H1 (cell line): ENCODE measurements at regions of chr2 and their contacts with region 1.

Region 1: DNA sequence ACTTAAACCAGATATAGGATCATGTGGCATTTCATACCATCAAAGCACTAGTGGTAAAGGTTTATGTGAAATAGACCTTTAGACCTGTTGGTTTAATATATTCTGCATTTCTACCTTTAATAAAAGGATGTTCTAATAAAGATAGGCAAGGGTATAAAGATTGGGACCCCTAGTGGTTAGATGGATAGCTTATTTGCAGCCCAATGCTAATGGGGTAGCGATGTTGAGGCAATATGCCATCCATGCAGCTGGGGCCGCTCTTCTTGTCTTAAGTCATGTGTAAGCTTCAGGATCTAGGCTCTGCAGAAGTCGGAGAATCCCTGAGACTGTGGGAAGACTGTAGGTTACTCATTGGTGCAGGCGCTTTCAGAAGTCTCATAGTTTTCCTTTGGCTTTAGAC is 114.9 kb downstream of the ICOS start:
- DNase-seq: no peak
- H3K4me3 ChIP-seq: no peak overlapping the region
- H3K27ac ChIP-seq: no peak overlapping the region
- H3K4me1 ChIP-seq: no peaks in the 10 kb centered on the region
- H3K27me3 ChIP-seq: no peaks in the 10 kb centered on the region
- CTCF ChIP-seq: peak; percentile 22 to 63 (median 61)
- EP300 ChIP-seq: no peak
- POLR2A ChIP-seq: no peak
- RAD21 ChIP-seq: peak; percentile 17 to 21; a peak in 2 of 4 replicates

Region 2: DNA sequence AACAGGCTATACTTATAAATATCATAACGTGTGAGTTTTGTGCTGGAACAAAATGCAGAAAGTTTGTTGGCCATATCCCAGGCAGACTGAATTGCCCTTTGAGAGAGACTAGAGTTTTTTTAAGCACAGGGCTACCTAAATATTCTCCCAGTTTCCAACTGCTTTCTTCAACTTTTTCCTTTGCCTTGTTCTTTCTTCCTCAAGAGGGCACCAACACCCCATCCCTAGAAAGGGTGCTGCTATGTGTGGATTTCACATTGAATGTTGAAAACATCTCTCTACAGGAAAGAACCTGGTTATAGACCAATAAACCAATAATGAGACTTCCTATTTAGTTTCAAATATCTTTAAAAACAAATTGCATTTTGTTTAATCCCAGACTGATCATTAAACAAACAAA is 27.0 kb before region 1 on chr2:
- CTCF ChIA-PET with region 1: interaction called, 25 read pairs
- POLR2A ChIA-PET with region 1: no interaction called
- DNase-seq: no peak
- H3K4me3 ChIP-seq: no peak overlapping the region
- H3K27ac ChIP-seq: no peak overlapping the region
- H3K4me1 ChIP-seq: no peaks in the 10 kb centered on the region
- H3K27me3 ChIP-seq: no peaks in the 10 kb centered on the region; a peak in 1 of 7 replicates
- CTCF ChIP-seq: peak in 2 of 3 experiments; percentile 61 to 66; a peak in 3 of 4 replicates
- EP300 ChIP-seq: no peak
- POLR2A ChIP-seq: no peak
- RAD21 ChIP-seq: peak; percentile 82 to 84

Region 3: DNA sequence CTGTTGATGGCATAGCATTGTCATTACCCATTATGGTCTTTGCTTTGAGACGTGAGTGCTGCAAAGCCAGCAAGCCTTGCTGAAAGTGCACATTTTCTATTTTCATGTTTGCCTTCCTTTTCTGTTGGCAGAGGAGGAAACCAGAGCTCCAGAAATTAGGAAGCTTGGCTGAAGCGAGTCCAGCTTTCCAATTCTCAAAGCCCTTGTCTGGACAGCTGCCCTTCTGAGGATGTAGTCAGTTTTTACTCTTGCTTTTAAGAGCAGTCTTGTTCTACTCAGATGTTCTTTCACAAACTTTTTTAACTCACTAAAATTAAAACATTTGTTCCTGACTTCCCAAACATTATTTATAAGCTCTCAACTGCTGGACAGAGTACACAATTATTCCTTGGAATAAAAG is 21.2 kb before region 1 on chr2:
- CTCF ChIA-PET with region 1: interaction called, 25 read pairs
- POLR2A ChIA-PET with region 1: no interaction called
- DNase-seq: no peak
- H3K4me3 ChIP-seq: no peak overlapping the region
- H3K27ac ChIP-seq: no peak overlapping the region
- H3K4me1 ChIP-seq: no peaks in the 10 kb centered on the region
- H3K27me3 ChIP-seq: no peaks in the 10 kb centered on the region; a peak in 1 of 7 replicates
- CTCF ChIP-seq: no peak
- EP300 ChIP-seq: no peak
- POLR2A ChIP-seq: no peak
- RAD21 ChIP-seq: no peak

Region 4: GRCh38 chr2:204039298-204039838 is 12.1 kb before region 1 on chr2:
- CTCF ChIA-PET with region 1: interaction called, 23 read pairs
- POLR2A ChIA-PET with region 1: no interaction called
- DNase-seq: no peak
- H3K4me3 ChIP-seq: no peak overlapping the region
- H3K27ac ChIP-seq: no peak overlapping the region
- H3K4me1 ChIP-seq: no peaks in the 10 kb centered on the region
- H3K27me3 ChIP-seq: no peaks in the 10 kb centered on the region
- CTCF ChIP-seq: no peak
- EP300 ChIP-seq: no peak
- POLR2A ChIP-seq: no peak
- RAD21 ChIP-seq: no peak

Region 5: GRCh38 chr2:204072443-204073324 is 21.2 kb after region 1 on chr2:
- CTCF ChIA-PET with region 1: interaction called, 23 read pairs
- POLR2A ChIA-PET with region 1: no interaction called
- DNase-seq: peak; percentile 38 to 90
- H3K4me3 ChIP-seq: no peak overlapping the region
- H3K27ac ChIP-seq: no peak overlapping the region
- H3K4me1 ChIP-seq: no peaks in the 10 kb centered on the region
- H3K27me3 ChIP-seq: no peaks in the 10 kb centered on the region
- CTCF ChIP-seq: peak; percentile 71 to 75 (median 74)
- EP300 ChIP-seq: no peak
- POLR2A ChIP-seq: no peak
- RAD21 ChIP-seq: peak; percentile 82 to 86